Right ventricle myocardium superior (tissue), 1 donor: ENCODE measurements at regions of chr4 and their contacts with region 1.

Region 1: GRCh38 chr4:75673027-75673958 is at the start of gene G3BP2:
- DNase-seq: peak; percentile 99
- ATAC-seq: peak; percentile 99
- total RNA-seq, gene G3BP2: 69.2 TPM

Region 2: DNA sequence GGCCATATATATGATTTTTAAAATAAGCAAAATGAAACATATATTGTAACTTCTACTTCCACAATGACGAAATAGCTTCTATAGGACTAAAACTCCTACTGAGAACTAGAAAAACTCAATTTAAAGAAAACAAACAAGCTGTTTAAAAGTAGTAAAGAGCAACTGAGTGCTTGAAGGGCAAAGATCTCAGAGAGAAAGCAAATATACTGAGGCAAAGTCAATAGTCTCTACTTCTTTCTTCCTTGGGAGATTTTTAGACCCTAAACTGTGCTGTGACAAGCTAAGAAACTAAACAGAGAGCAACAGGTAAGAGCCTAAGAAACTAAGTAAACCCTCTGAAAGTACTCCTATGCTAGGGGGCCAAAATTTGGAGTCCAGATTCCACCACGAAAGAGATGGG is 167.7 kb before region 1 on chr4:
- intact Hi-C with region 1: no loop called
- DNase-seq: no peak
- ATAC-seq: no peak

Region 3: GRCh38 chr4:75724066-75724866 is 51.0 kb after region 1 on chr4 and contains the start of gene USO1:
- intact Hi-C with region 1: loop called (anchors 2 kb)
- DNase-seq: peak; percentile 100
- ATAC-seq: peak; percentile 96
- total RNA-seq, gene USO1: 87.7 TPM

Region 4: GRCh38 chr4:75735525-75735924 is 62.2 kb after region 1 on chr4:
- intact Hi-C with region 1: no loop called
- DNase-seq: no peak
- ATAC-seq: no peak